Esophagus squamous epithelium (tissue), 5 donors: ENCODE measurements at regions of chr10 and their contacts with region 1.

Region 1: DNA sequence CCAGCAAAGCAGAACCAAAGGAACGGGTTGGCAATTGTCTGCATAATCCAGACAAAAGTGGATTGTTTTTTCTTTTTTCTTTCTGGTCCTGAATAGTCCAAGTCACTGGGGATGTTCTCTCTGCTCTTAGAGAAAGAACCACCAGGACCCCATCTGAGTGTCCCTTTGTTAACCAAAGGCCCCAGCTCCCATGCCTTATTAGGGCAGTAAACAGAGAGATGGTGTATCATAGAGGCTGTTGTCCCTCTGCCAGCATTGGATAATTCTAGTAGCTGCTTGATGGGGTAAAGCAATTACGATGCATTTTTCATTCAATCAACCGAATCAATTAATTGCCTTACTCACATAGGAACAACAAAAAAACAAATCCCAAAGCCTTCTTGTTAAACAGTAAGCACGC is 213.0 kb downstream of the BUB3 start:
- DNase-seq: no peak
- H3K4me3 ChIP-seq: no peak overlapping the region
- H3K27ac ChIP-seq: no peak overlapping the region
- H3K4me1 ChIP-seq: no peaks in the 10 kb centered on the region
- H3K27me3 ChIP-seq: no peaks in the 10 kb centered on the region
- CTCF ChIP-seq: no peak
- POLR2A ChIP-seq: no peak

Region 2: GRCh38 chr10:123132576-123133477 is 234.4 kb before region 1 on chr10:
- intact Hi-C with region 1: loop called (anchors 10 kb)
- DNase-seq: peak; percentile 18
- H3K4me3 ChIP-seq: peak overlapping the region in 2 of 4 donors; percentile 8 to 51
- H3K27ac ChIP-seq: no peak overlapping the region
- H3K4me1 ChIP-seq: peaks cover 44 to 54% (median 50%) of the 10 kb centered on the region in 3 donors
- H3K27me3 ChIP-seq: peaks cover 45 to 100% (median 50%) of the 10 kb centered on the region in 4 donors
- CTCF ChIP-seq: peak; percentile 86 to 90 (median 88)
- POLR2A ChIP-seq: no peak